Right cardiac atrium (tissue), 5 donors: ENCODE measurements at regions of chr7 and their contacts with region 1.

Region 1: DNA sequence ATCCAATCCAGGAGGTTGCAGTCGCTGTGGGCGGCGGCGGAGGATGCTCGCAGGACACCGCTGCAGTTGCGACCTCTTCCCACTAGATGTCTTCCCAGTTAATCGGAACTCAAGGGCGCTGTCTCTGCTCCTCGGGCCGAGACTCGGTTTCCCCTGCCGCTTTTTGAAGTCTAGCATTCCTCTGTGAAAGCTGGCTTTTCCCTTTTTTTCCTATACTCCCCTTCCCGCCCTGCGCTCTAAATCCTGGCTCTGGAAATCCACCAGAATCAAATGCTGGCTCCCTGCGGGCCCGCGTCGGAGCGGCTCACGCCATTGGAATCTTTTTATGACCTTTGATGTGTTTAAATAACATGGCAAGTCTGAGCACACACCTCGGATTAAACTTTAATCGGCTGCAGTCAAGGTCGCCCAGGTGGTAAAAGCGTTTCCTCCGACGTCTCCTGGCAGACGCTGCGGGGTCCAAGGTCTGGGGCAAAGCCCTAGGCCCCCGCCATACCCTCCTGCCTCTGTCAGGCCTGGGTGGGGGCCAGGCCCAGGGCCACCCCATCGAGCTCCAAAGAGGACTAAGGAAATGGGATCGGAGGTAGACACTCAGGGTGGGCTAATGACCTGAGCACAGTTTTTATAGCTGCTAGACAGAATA is 10.7 kb upstream of the HOXA13 start:
- DNase-seq: peak in 2 of 3 donors; percentile 52 to 75
- ATAC-seq: peak; percentile 67 to 68
- H3K4me3 ChIP-seq: peak overlapping the region; percentile 27
- H3K27ac ChIP-seq: no peak overlapping the region
- H3K4me1 ChIP-seq: no peaks in the 10 kb centered on the region
- H3K27me3 ChIP-seq: peaks cover 3% of the 10 kb centered on the region

Region 2: DNA sequence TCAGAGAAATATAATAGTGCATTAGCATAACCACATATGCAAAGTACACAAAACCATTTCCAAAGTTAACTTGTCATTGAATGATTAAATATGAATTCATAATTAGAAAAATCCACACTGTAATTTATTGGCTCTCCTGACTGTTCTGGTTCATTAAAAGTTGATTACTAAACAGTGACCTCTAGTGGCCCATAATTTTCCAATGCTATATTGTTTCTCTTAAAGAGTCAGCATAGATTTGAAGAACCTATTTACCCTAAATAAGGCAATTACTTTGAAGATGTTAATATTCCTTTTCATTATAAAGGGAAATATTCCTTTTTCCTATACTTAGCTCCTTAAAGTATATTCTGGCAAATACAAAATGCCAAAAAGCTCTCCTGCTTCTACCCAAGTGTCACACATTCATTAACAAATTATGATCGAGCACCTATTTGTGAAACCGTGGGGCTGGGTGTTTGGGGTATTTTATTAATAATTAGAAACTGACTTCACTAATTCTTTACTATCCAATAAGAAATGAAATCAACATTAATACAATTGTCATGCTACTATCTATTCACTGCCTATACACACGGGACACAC is 365.9 kb after region 1 on chr7:
- intact Hi-C with region 1: loop called in 2 of 4 experiments (anchors 10 kb)
- DNase-seq: no peak
- ATAC-seq: peak in 1 of 2 donors; percentile 57
- H3K4me3 ChIP-seq: no peak overlapping the region
- H3K27ac ChIP-seq: no peak overlapping the region
- H3K4me1 ChIP-seq: no peaks in the 10 kb centered on the region
- H3K27me3 ChIP-seq: no peaks in the 10 kb centered on the region

Region 3: DNA sequence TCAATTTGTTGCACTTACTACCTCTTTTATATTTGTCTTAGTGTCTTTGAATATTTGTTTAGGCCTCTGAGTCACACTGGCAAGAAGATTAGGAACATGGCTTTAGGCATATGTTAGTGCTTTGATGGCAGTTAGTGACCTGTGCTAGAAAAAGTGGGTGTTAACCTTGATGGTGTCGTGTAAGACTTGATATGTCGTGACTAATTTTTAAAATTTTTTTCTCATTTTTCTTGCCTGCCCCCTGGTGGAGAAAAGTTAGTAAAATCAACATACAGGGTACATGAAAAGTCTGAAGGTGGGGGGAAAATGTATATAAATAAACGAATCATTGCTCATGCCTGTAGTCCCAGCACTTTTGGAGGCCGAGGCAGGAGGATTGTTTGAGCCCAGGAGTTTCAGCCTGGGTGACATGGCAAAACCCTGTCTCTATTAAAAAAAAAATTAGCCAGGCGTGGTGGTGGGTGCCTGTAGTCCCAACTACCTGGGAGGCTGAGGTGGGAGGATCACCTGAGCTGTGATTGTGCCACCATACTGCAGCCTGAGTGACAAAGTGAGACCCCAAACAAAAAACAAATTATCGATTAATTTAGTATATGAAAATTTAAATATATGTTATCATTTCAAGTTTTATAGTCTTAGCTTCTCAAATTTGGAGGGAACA is 574.0 kb after region 1 on chr7:
- intact Hi-C with region 1: loop called in 1 of 4 experiments (anchors 10 kb)
- DNase-seq: no peak
- ATAC-seq: no peak
- H3K4me3 ChIP-seq: no peak overlapping the region
- H3K27ac ChIP-seq: no peak overlapping the region
- H3K4me1 ChIP-seq: no peaks in the 10 kb centered on the region
- H3K27me3 ChIP-seq: no peaks in the 10 kb centered on the region